Dorsolateral prefrontal cortex (tissue), 120 donors: ENCODE measurements at regions of chr3 and their contacts with region 1.

Region 1: GRCh38 chr3:114498779-114499370 is 205.0 kb downstream of the TIGIT start:
- DNase-seq: peak in 4 of 10 donors; percentile 4 to 52 (median 39)
- H3K4me3 ChIP-seq: no peak overlapping the region
- H3K27ac ChIP-seq: peak overlapping the region in 9 of 59 donors; percentile 2 to 59 (median 20)
- H3K27me3 ChIP-seq: no peaks in the 10 kb centered on the region
- CTCF ChIP-seq: no peak

Region 2: GRCh38 chr3:114464548-114464947 is 34.3 kb before region 1 on chr3:
- intact Hi-C with region 1: loop called in 1 of 2 experiments (anchors 5 kb)
- DNase-seq: no peak
- H3K4me3 ChIP-seq: no peak overlapping the region
- H3K27ac ChIP-seq: no peak overlapping the region
- H3K27me3 ChIP-seq: no peaks in the 10 kb centered on the region
- CTCF ChIP-seq: no peak